BJ (cell line): ENCODE measurements at regions of chr10 and their contacts with region 1.

Region 1: DNA sequence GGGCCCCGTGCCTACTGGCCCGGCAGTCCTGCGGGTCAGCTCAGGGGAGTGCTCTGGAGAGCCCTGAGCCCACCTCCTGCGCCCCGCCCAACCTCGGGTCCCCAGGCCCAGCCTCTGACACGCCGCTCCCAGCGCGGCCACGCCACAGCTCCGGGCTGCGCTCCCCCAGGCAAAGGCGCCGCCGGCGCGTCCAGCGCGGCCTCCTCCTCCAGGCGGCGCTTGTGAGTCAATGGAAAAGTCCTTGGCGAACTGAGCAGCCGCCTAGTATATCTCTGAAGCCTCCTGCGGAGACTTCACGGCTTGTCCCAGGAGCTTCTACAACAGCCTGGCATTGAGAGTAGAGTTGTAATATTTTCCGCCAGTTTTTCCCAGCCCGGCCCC is 29.5 kb upstream of the BMS1 start:
- DNase-seq: no peak
- H3K4me3 ChIP-seq: peak overlapping the region; percentile 40
- H3K27me3 ChIP-seq: peaks cover 21% of the 10 kb centered on the region
- CTCF ChIP-seq: peak; percentile 81

Region 2: GRCh38 chr10:42769653-42770052 is 16.5 kb after region 1 on chr10:
- CTCF ChIA-PET with region 1: interaction called, 10 read pairs
- POLR2A ChIA-PET with region 1: no interaction called
- DNase-seq: no peak
- H3K4me3 ChIP-seq: no peak overlapping the region
- H3K27me3 ChIP-seq: no peaks in the 10 kb centered on the region
- CTCF ChIP-seq: no peak

Region 3: DNA sequence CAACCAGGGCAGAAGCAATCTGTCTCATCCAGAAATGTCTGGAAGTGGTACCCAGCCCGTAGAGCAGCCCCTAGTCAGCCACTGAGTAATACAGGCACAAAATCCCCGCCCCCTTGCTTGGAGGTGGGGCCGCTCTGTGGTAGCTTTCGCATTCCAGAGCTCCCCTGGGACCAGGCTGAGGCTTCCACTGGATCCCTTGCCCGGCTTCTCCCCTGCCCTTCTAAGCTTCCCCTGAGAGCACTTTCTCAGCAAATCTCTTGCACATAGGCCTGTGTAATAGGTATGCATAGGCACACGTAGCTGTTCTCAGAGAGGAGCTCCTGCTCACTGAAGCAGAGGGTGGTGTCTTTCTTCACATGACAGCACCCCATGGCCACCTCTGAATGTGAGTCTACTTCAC is 173.7 kb after region 1 on chr10:
- CTCF ChIA-PET with region 1: no interaction called
- POLR2A ChIA-PET with region 1: no interaction called
- DNase-seq: no peak
- H3K4me3 ChIP-seq: no peak overlapping the region
- H3K27me3 ChIP-seq: no peaks in the 10 kb centered on the region; the same call in 1 of the 2 replicates
- CTCF ChIP-seq: no peak